Naive thymus-derived CD4-positive, alpha-beta T cell (primary cell): ENCODE measurements at regions of chr19 and their contacts with region 1.

Region 1: GRCh38 chr19:18044825-18045304 is 36.9 kb downstream of the ARRDC2 start:
- DNase-seq: peak; percentile 51 to 87 (median 78)
- ATAC-seq: peak; percentile 97
- H3K4me3 ChIP-seq: peak overlapping the region; percentile 79
- H3K4me3 Mint-ChIP-seq: peak overlapping the region; percentile 66 to 90 (median 86)
- H3K27ac ChIP-seq: peak overlapping the region; percentile 76
- H3K27ac Mint-ChIP-seq: peak overlapping the region; percentile 81 to 98 (median 95)
- H3K4me1 ChIP-seq: peaks cover 12 to 31% of the 10 kb centered on the region in 2 donors
- H3K4me1 Mint-ChIP-seq: peaks cover 35 to 60% (median 55%) of the 10 kb centered on the region in 7 donors
- H3K27me3 ChIP-seq: no peaks in the 10 kb centered on the region
- H3K27me3 Mint-ChIP-seq: peaks cover 0 to 10% (median 0%) of the 10 kb centered on the region in 5 donors

Region 2: DNA sequence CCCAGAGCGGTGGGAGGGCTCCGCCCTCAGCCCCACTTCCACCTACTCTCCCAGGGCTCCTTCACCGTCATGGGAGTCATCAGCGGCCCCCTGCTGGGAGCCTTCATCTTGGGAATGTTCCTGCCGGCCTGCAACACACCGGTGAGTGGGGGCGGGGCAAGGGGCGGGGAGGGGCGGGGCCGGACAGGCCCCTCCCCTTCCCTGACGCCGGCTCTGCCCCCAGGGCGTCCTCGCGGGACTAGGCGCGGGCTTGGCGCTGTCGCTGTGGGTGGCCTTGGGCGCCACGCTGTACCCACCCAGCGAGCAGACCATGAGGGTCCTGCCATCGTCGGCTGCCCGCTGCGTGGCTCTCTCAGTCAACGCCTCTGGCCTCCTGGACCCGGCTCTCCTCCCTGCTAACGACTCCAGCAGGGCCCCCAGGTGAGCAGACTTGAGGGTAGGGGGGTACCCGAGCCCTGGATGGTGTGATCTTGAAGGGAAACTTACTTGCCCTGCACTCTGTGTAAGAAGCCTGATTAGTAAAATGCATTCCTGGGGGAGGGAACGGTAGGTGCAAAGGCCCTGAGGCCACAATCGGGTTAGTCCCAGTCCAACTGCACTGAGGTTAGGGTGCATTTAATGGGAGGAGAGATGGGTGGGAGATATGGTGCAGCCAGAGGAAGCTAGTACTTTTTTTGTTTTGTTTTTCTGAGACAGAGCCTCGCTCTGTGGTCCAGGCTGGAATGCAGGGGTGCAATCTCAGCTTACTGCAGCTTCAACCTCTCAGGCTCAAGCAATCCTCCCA is 161.0 kb before region 1 on chr19:
- CTCF ChIA-PET with region 1: no interaction called
- POLR2A ChIA-PET with region 1: no interaction called
- intact Hi-C with region 1: no loop called
- DNase-seq: no peak
- ATAC-seq: no peak
- H3K4me3 ChIP-seq: no peak overlapping the region
- H3K4me3 Mint-ChIP-seq: no peak overlapping the region
- H3K27ac ChIP-seq: no peak overlapping the region
- H3K27ac Mint-ChIP-seq: no peak overlapping the region
- H3K4me1 ChIP-seq: no peaks in the 10 kb centered on the region
- H3K4me1 Mint-ChIP-seq: no peaks in the 10 kb centered on the region
- H3K27me3 ChIP-seq: no peaks in the 10 kb centered on the region
- H3K27me3 Mint-ChIP-seq: no peaks in the 10 kb centered on the region

Region 3: DNA sequence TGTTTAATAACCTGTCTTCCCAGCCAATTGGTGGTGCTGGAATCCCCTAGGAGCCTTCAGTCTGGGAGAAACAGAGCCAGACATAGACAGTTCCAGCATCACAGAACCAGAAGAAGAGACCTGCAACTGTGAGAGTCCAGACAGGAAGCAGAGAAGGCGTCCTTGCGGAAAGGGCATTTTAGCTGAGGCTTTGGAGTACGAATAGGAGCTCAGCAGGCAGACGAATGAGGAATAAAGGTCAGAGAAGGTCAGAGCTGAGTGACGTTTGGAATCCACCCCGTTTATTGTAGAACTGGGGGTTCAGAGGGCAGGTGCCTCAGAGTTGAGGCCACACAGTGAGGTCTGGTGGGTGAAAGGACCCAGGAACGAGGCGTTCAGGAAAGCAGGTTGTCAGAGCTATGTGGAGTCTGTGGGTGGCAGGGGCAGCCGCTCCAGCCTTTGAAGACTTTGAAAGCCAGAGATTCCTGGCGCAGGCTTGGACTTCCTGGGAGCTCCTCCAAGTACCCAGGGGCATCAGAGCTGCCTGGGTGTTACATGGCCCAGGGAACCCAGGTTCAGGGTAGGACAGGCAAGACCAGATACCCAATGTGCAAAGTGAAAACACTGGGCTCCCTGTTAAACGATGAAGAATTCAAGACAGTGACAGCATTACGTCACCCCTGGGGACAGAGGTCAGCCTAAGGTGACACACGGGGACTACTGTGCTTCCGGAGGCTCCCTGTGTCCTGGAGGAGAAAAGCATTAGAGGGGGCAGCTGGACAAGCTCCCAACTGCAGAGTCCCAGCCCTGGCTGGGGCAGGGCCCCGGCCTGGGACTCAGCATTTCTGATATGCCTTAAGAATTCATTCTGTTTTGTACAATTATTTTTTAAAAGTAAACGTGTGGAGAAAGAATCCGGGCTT is 31.4 kb before region 1 on chr19:
- CTCF ChIA-PET with region 1: interaction called, 4 read pairs
- POLR2A ChIA-PET with region 1: interaction called, 961 read pairs
- intact Hi-C with region 1: loop called (anchors 1 kb)
- DNase-seq: peak in 3 of 9 donors; percentile 36 to 51 (median 50)
- ATAC-seq: peak; percentile 28
- H3K4me3 ChIP-seq: peak overlapping the region; percentile 23
- H3K4me3 Mint-ChIP-seq: peak overlapping the region; percentile 71 to 94 (median 84)
- H3K27ac ChIP-seq: peak overlapping the region; percentile 80
- H3K27ac Mint-ChIP-seq: peak overlapping the region; percentile 92 to 100 (median 98)
- H3K4me1 ChIP-seq: peaks cover 13 to 77% of the 10 kb centered on the region in 2 donors
- H3K4me1 Mint-ChIP-seq: peaks cover 45 to 77% (median 65%) of the 10 kb centered on the region in 7 donors
- H3K27me3 ChIP-seq: no peaks in the 10 kb centered on the region
- H3K27me3 Mint-ChIP-seq: no peaks in the 10 kb centered on the region

Region 4: DNA sequence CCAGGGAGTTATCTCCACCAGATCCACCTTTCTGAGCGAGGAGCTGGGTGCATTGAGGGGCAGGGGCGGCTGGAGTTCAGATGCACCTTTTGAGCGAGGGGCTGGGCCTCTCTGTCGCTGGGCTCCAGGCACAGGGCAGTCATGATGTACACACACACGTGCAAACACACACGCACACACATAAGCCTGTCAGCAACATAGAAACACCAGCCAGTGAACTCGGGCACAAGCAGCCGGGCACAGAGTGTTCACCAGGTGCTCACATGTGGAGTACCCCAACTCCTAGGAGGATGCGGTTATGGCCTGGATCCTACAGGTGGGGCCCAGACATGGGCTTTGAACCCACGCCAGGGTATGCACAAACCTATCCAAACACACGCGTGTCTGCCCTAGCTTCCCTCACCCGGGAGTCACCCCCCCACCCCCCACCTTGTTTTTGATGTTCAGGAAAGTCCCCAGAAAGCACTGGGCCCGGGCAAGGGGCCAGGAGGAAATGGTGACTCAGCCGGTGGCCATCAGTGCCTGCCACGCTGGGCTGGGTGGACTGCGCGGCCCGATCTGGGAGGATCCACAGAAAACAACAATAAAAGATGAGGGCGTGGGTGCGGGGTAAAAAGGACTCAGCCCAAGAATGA is 23.6 kb before region 1 on chr19:
- CTCF ChIA-PET with region 1: interaction called, 13 read pairs
- POLR2A ChIA-PET with region 1: interaction called, 961 read pairs
- intact Hi-C with region 1: loop called (anchors 1 kb)
- DNase-seq: peak in 6 of 9 donors; percentile 45 to 81 (median 53)
- ATAC-seq: peak; percentile 57
- H3K4me3 ChIP-seq: no peak overlapping the region
- H3K4me3 Mint-ChIP-seq: peak overlapping the region; percentile 53 to 92 (median 67)
- H3K27ac ChIP-seq: peak overlapping the region; percentile 95
- H3K27ac Mint-ChIP-seq: peak overlapping the region; percentile 92 to 100 (median 99)
- H3K4me1 ChIP-seq: peaks cover 22 to 57% of the 10 kb centered on the region in 2 donors
- H3K4me1 Mint-ChIP-seq: peaks cover 53 to 78% (median 67%) of the 10 kb centered on the region in 7 donors
- H3K27me3 ChIP-seq: no peaks in the 10 kb centered on the region
- H3K27me3 Mint-ChIP-seq: no peaks in the 10 kb centered on the region